ENCODE measurements at regions of chr2 and their contacts with region 1.

Region 1: DNA sequence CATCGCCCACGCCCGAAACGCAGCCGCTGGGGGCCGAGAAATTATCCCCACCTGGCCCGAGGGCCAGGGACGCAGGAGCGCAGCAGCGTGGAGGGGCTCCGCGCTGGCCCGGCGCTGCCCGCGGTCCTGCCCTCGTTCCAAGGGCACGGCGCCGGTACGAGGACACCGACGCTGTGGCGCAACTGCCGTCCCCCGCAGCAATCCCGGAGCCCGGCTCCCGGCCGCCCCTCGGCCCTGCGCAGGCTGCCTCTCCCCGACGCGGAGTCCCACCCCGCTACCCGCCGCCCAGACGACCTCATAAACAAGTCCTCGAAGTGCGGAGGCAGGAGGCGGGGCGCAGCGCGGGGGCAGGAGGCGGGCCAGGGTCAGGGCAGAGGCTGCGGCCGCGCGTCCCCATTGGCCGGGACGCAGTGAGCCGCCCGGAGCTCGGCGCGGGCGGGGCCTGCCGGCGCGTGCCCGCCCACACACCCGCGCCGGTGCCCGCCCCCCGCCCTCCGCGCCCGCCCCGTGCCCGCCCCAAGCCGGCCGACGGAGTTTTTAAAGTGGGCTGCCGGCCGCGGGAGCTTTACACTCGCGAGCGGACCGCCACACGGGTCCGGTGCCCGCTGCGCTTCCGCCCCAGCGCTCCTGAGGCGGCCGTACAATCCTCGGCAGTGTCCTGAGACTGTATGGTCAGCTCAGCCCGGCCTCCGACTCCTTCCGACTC is at the start of gene EPAS1:
- DNase-seq: peak; percentile 54 to 92 (median 74)
- ATAC-seq: peak; percentile 79
- H3K4me3 ChIP-seq: peak within 1 kb of the TSS; percentile 84
- H3K4me3 Mint-ChIP-seq: peak within 1 kb of the TSS; percentile 98
- H3K27ac ChIP-seq: no peak within 1 kb of the TSS
- H3K27ac Mint-ChIP-seq: peak within 1 kb of the TSS; percentile 78
- H3K4me1 ChIP-seq: peaks cover 34% of the 10 kb centered on the region
- H3K4me1 Mint-ChIP-seq: peaks cover 29% of the 10 kb centered on the region
- H3K27me3 ChIP-seq: peaks cover 35 to 39% of the 10 kb centered on the region in 2 experiments
- H3K27me3 Mint-ChIP-seq: peaks cover 39% of the 10 kb centered on the region
- CTCF ChIP-seq: no peak
- total RNA-seq, gene EPAS1: 4.2 to 5.4 TPM

Region 2: GRCh38 chr2:45643543-45644542 is 653.1 kb before region 1 on chr2:
- CTCF ChIA-PET with region 1: no interaction called
- POLR2A ChIA-PET with region 1: no interaction called
- intact Hi-C with region 1: loop called in 1 of 2 experiments (anchors 2 kb)
- DNase-seq: peak; percentile 37 to 89 (median 72)
- ATAC-seq: peak; percentile 97
- H3K4me3 ChIP-seq: peak overlapping the region; percentile 50
- H3K4me3 Mint-ChIP-seq: no peak overlapping the region
- H3K27ac ChIP-seq: no peak overlapping the region
- H3K27ac Mint-ChIP-seq: no peak overlapping the region
- H3K4me1 ChIP-seq: peaks cover 10% of the 10 kb centered on the region
- H3K4me1 Mint-ChIP-seq: peaks cover 6% of the 10 kb centered on the region
- H3K27me3 ChIP-seq: peaks cover 15 to 22% of the 10 kb centered on the region in 2 experiments
- H3K27me3 Mint-ChIP-seq: peaks cover 33% of the 10 kb centered on the region
- CTCF ChIP-seq: peak; percentile 90

Region 3: DNA sequence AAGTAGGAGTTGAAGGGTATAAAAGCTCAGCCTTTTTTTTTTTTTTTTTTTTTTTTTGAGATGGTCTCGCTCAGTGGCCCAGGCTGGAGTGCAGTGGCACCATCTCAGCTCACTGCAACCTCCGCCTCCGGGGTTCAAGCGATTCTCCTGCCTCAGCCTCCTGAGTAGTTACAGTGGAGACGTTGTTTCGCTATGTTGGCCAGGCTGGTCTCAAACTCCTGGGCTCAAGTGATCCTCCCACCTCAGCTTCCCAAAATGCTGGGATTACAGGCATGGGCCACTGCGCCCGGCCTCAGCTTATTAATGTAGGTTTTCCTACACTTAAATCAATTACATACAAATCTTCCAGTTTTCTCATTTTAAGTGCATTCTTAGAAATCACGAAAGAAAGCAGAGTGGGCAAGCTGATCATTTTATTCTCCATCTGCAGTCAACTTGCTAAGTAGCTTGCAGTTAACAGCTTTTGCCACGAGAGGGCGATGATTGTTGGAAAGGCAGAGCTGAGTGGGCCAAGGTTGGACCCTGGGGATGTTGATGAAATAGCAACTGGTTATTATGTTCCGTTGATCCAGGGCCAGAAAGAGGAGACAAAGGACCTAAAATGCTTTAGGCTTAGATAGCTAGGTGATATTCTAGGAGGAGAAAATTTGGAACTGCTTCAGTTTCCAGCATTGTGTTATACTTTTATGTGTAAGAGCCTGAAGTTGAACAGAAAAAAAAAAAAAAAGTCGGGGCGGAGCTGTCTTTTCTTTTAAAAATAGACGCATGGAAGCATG is 234.2 kb before region 1 on chr2:
- CTCF ChIA-PET with region 1: interaction called, 5 read pairs
- POLR2A ChIA-PET with region 1: interaction called, 4 read pairs
- intact Hi-C with region 1: loop called (anchors 2 to 5 kb)
- DNase-seq: peak; percentile 41 to 74 (median 57)
- ATAC-seq: peak; percentile 52
- H3K4me3 ChIP-seq: no peak overlapping the region
- H3K4me3 Mint-ChIP-seq: no peak overlapping the region
- H3K27ac ChIP-seq: no peak overlapping the region
- H3K27ac Mint-ChIP-seq: no peak overlapping the region
- H3K4me1 ChIP-seq: no peaks in the 10 kb centered on the region
- H3K4me1 Mint-ChIP-seq: no peaks in the 10 kb centered on the region
- H3K27me3 ChIP-seq: no peaks in the 10 kb centered on the region
- H3K27me3 Mint-ChIP-seq: no peaks in the 10 kb centered on the region
- CTCF ChIP-seq: peak; percentile 88

Region 4: GRCh38 chr2:46239847-46240181 is 57.2 kb before region 1 on chr2:
- CTCF ChIA-PET with region 1: no interaction called
- POLR2A ChIA-PET with region 1: interaction called, 4 read pairs
- intact Hi-C with region 1: loop called in 1 of 2 experiments (anchors 5 kb)
- DNase-seq: peak; percentile 32 to 88 (median 48)
- ATAC-seq: peak; percentile 99
- H3K4me3 ChIP-seq: no peak overlapping the region
- H3K4me3 Mint-ChIP-seq: no peak overlapping the region
- H3K27ac ChIP-seq: peak overlapping the region in 1 of 2 donors; percentile 51
- H3K27ac Mint-ChIP-seq: peak overlapping the region; percentile 52
- H3K4me1 ChIP-seq: peaks cover 29% of the 10 kb centered on the region
- H3K4me1 Mint-ChIP-seq: peaks cover 36% of the 10 kb centered on the region
- H3K27me3 ChIP-seq: no peaks in the 10 kb centered on the region
- H3K27me3 Mint-ChIP-seq: no peaks in the 10 kb centered on the region
- CTCF ChIP-seq: no peak

Region 5: GRCh38 chr2:46351750-46352138 is 54.8 kb after region 1 on chr2:
- CTCF ChIA-PET with region 1: no interaction called
- POLR2A ChIA-PET with region 1: interaction called, 4 read pairs
- intact Hi-C with region 1: loop called (anchors 5 kb)
- DNase-seq: peak; percentile 40 to 90 (median 66)
- ATAC-seq: peak; percentile 87
- H3K4me3 ChIP-seq: peak overlapping the region; percentile 40
- H3K4me3 Mint-ChIP-seq: peak overlapping the region; percentile 80
- H3K27ac ChIP-seq: peak overlapping the region in 1 of 2 donors; percentile 63
- H3K27ac Mint-ChIP-seq: peak overlapping the region; percentile 90
- H3K4me1 ChIP-seq: peaks cover 74% of the 10 kb centered on the region
- H3K4me1 Mint-ChIP-seq: peaks cover 94% of the 10 kb centered on the region
- H3K27me3 ChIP-seq: no peaks in the 10 kb centered on the region
- H3K27me3 Mint-ChIP-seq: no peaks in the 10 kb centered on the region
- CTCF ChIP-seq: no peak

Region 6: GRCh38 chr2:46690825-46691224 is 393.8 kb after region 1 on chr2:
- CTCF ChIA-PET with region 1: no interaction called
- POLR2A ChIA-PET with region 1: no interaction called
- intact Hi-C with region 1: loop called in 1 of 2 experiments (anchors 5 kb)
- DNase-seq: no peak
- ATAC-seq: no peak
- H3K4me3 ChIP-seq: no peak overlapping the region
- H3K4me3 Mint-ChIP-seq: no peak overlapping the region
- H3K27ac ChIP-seq: no peak overlapping the region
- H3K27ac Mint-ChIP-seq: no peak overlapping the region
- H3K4me1 ChIP-seq: no peaks in the 10 kb centered on the region
- H3K4me1 Mint-ChIP-seq: no peaks in the 10 kb centered on the region
- H3K27me3 ChIP-seq: no peaks in the 10 kb centered on the region
- H3K27me3 Mint-ChIP-seq: peaks cover 18% of the 10 kb centered on the region
- CTCF ChIP-seq: no peak

Region 7: GRCh38 chr2:46937471-46937901 is 640.5 kb after region 1 on chr2:
- CTCF ChIA-PET with region 1: no interaction called
- POLR2A ChIA-PET with region 1: no interaction called
- intact Hi-C with region 1: loop called in 1 of 2 experiments (anchors 10 kb)
- DNase-seq: peak in 2 of 14 experiments; percentile 46 to 49
- ATAC-seq: no peak
- H3K4me3 ChIP-seq: no peak overlapping the region
- H3K4me3 Mint-ChIP-seq: no peak overlapping the region
- H3K27ac ChIP-seq: peak overlapping the region in 1 of 2 donors; percentile 2
- H3K27ac Mint-ChIP-seq: peak overlapping the region; percentile 53
- H3K4me1 ChIP-seq: peaks cover 22% of the 10 kb centered on the region
- H3K4me1 Mint-ChIP-seq: peaks cover 35% of the 10 kb centered on the region
- H3K27me3 ChIP-seq: no peaks in the 10 kb centered on the region
- H3K27me3 Mint-ChIP-seq: no peaks in the 10 kb centered on the region
- CTCF ChIP-seq: peak; percentile 41